IMR-90 (cell line): ENCODE measurements at regions of chr11 and their contacts with region 1.

Region 1: GRCh38 chr11:48307760-48308386 is 1.9 kb downstream of the OR4S1 start:
- DNase-seq: peak; percentile 48
- ATAC-seq: peak; percentile 90
- H3K4me3 ChIP-seq: no peak overlapping the region
- H3K27ac ChIP-seq: no peak overlapping the region
- H3K4me1 ChIP-seq: no peaks in the 10 kb centered on the region
- H3K27me3 ChIP-seq: no peaks in the 10 kb centered on the region
- CTCF ChIP-seq: peak; percentile 79
- POLR2A ChIP-seq: no peak
- RAD21 ChIP-seq: peak; percentile 70

Region 2: GRCh38 chr11:48172818-48173609 is 134.9 kb before region 1 on chr11:
- CTCF ChIA-PET with region 1: interaction called, 4 read pairs
- POLR2A ChIA-PET with region 1: no interaction called
- dilution Hi-C with region 1: no loop called
- in situ Hi-C with region 1: no loop called
- intact Hi-C with region 1: loop called (anchors 2 kb)
- DNase-seq: peak; percentile 69
- ATAC-seq: peak; percentile 80
- H3K4me3 ChIP-seq: no peak overlapping the region
- H3K27ac ChIP-seq: no peak overlapping the region
- H3K4me1 ChIP-seq: peaks cover 12% of the 10 kb centered on the region
- H3K27me3 ChIP-seq: no peaks in the 10 kb centered on the region; the same call in 1 of the 2 replicates
- CTCF ChIP-seq: peak; percentile 90
- POLR2A ChIP-seq: no peak
- RAD21 ChIP-seq: peak; percentile 88

Region 3: GRCh38 chr11:48366365-48366764 is 58.5 kb after region 1 on chr11 and contains the start of gene OR4C5:
- CTCF ChIA-PET with region 1: no interaction called
- POLR2A ChIA-PET with region 1: no interaction called
- dilution Hi-C with region 1: no loop called
- in situ Hi-C with region 1: no loop called
- intact Hi-C with region 1: no loop called
- DNase-seq: no peak
- ATAC-seq: no peak
- H3K4me3 ChIP-seq: no peak within 1 kb of the TSS
- H3K27ac ChIP-seq: no peak within 1 kb of the TSS
- H3K4me1 ChIP-seq: no peaks in the 10 kb centered on the region
- H3K27me3 ChIP-seq: no peaks in the 10 kb centered on the region
- CTCF ChIP-seq: no peak
- POLR2A ChIP-seq: no peak
- RAD21 ChIP-seq: no peak
- total RNA-seq, gene OR4C5: not detected in 2 replicates

Region 4: DNA sequence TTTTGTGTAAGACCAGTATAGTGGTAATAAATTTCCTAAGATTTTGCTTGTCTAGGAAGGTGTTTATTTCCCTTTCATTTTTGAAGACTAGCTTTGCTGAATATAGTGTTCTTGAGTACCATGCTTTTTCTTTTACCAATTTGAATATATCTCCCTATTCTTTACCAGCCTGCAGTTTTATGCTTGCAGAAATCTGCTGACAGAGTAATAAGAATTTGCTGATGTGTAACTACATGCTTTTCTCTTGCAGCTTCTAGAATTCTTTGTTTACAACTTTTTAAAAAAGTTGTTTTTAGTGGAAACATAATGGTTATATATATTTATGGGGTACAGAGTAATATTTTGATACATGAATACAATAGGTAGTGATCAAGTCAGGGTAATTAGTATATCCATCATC is 1225.3 kb after region 1 on chr11:
- CTCF ChIA-PET with region 1: no interaction called
- POLR2A ChIA-PET with region 1: no interaction called
- dilution Hi-C with region 1: no loop called
- in situ Hi-C with region 1: no loop called
- intact Hi-C with region 1: loop called (anchors 10 kb)
- DNase-seq: no peak
- ATAC-seq: no peak
- H3K4me3 ChIP-seq: no peak overlapping the region
- H3K27ac ChIP-seq: no peak overlapping the region
- H3K4me1 ChIP-seq: no peaks in the 10 kb centered on the region
- H3K27me3 ChIP-seq: no peaks in the 10 kb centered on the region
- CTCF ChIP-seq: no peak
- POLR2A ChIP-seq: no peak
- RAD21 ChIP-seq: no peak